Activated CD4-positive, alpha-beta memory T cell treated with anti-CD3 and anti-CD28 coated beads for 36 hours (primary cell): ENCODE measurements at regions of chr1 and their contacts with region 1.

Region 1: DNA sequence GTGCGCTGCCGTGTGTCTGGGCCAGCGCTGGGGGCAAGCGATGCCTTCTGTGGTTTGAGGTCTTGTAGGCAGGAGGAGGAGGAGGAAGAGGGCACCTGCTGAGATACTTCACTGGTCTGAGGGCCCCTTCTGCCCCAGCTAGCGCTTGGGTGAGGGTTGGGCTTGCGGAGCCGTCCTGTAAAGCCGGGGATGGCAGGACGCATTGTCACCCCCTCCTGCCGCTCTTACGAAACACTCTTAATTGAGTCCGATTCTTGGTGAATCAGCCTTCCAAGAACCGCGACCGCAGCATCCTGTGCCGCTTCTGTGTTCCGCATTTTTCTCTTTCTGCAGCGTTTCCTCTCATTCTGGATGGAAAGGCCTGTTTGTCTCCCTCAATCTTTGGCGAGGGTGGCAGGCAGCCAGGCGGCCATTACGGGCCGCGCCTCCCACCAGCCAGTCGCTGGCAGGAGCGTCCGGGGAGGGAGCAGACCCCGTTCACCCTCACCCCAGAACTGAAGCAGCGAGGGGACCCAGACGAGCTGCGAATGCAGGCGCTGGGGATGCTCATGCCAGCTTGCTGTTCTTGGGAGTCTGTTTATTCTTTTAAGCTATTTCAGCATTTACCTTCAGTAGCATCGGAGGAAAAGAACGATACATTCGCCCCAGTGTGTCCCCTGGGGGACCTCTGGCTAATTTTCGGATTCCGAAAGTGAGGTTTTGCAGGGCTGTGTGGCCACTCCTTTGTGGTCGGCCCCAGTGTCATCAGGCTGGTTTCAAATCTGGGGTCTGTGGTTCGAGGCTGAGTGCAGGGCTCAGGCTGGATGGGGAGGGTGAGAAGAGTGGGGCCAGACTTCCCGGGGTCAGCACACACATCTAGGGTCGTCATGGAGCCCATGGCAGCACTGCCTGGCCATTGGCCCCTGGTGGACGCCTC is 62.7 kb downstream of the SKI start:
- DNase-seq: peak; percentile 94
- H3K4me3 Mint-ChIP-seq: peak overlapping the region; percentile 70
- H3K27ac Mint-ChIP-seq: peak overlapping the region; percentile 96
- H3K4me1 Mint-ChIP-seq: peaks cover 81% of the 10 kb centered on the region
- H3K27me3 Mint-ChIP-seq: no peaks in the 10 kb centered on the region

Region 2: GRCh38 chr1:1890506-1891348 is 400.1 kb before region 1 on chr1 and contains the start of gene GNB1:
- CTCF ChIA-PET with region 1: no interaction called
- POLR2A ChIA-PET with region 1: no interaction called
- intact Hi-C with region 1: no loop called
- DNase-seq: peak; percentile 90
- H3K4me3 Mint-ChIP-seq: peak within 1 kb of the TSS; percentile 81
- H3K27ac Mint-ChIP-seq: peak within 1 kb of the TSS; percentile 88
- H3K4me1 Mint-ChIP-seq: peaks cover 49% of the 10 kb centered on the region
- H3K27me3 Mint-ChIP-seq: no peaks in the 10 kb centered on the region
- total RNA-seq, gene GNB1: 396 to 403 TPM

Region 3: DNA sequence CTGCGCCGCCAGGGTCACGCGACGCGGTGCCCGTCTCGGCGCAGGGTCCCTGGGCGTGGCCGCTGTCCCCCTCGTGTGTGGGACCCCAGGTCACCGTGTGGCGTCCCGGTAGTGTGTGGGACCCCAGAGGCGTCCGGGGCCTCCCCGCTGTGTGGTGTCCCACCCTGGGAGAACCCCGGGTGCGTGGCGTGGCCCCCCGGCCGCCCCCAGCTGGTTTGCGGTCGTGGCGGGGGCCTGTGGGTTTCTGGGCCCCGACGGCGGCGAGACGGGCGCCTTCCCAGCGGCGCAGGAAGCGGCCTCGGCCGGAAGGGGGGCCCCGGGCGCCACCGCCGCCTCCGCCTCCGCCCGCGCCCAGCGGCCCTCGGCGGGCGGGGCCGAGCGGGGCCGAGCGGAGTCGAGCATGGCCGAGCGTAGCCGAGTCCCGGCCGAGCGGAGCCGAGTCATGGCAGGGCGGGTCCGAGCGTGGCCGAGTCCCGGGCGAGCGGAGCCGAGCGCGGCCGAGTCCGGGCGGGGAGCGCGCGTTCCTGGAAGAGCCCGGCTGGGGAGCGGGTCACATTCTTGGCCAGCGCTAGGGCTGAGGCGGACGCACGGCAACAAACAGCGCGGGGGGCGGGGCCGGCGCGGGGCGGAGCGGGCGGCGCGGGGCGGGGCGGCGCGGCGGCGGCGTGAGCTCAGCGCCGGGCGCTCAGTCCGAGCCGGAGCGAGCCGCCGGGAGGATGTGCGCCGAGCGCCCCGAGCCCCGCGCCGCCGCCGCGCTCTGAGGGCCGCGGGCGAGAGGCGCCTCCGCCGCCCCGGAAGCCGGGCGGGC is 63.3 kb before region 1 on chr1:
- CTCF ChIA-PET with region 1: no interaction called
- POLR2A ChIA-PET with region 1: interaction called, 15 read pairs
- intact Hi-C with region 1: no loop called
- DNase-seq: peak; percentile 97
- H3K4me3 Mint-ChIP-seq: peak overlapping the region; percentile 55
- H3K27ac Mint-ChIP-seq: no peak overlapping the region
- H3K4me1 Mint-ChIP-seq: peaks cover 9% of the 10 kb centered on the region
- H3K27me3 Mint-ChIP-seq: peaks cover 1% of the 10 kb centered on the region

Region 4: GRCh38 chr1:2255420-2256369 is 35.2 kb before region 1 on chr1:
- CTCF ChIA-PET with region 1: no interaction called
- POLR2A ChIA-PET with region 1: interaction called, 9 read pairs
- intact Hi-C with region 1: loop called (anchors 1 kb)
- DNase-seq: peak; percentile 89
- H3K4me3 Mint-ChIP-seq: no peak overlapping the region
- H3K27ac Mint-ChIP-seq: no peak overlapping the region
- H3K4me1 Mint-ChIP-seq: peaks cover 51% of the 10 kb centered on the region
- H3K27me3 Mint-ChIP-seq: no peaks in the 10 kb centered on the region

Region 5: DNA sequence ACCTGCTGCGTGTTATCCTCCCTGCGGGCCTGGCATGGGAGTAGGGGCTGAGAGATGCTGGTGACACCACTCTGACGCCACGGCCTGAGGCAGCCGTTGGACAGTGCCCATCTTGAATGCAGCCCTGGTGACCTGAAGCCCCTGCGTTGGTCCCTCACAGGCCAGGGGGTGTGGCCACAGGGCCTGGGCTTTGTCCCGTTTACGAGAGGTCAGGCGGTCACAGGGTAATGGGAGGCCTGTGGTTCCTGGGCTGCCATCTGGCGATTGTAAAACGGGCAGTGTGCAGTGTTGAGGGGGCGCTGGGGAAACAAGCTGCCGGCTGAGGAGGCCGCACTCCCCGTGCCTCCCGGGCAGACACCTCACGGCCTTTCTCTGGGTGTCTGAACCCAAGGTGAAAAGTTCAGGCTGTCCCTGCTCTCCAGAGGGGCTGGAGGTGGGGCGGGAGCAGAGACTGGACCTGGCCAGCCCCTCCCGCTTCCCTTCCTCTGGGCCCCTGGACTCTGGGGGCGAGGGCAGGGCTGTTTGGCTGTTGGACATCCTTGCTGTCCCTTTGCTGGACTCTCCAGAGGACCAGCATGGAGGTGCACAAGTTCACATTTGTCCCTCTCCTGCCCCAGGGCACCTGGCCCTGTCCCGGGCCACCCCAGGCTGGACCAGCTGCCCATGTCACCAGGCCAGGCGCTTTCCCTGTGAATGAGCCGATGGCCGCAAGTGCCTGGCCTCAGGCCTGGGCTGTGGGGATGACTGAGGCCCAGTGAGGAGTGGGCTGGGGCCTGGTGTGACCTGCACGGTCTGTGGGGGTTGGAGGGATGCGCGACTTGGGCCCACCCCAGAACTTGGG is 20.4 kb before region 1 on chr1:
- CTCF ChIA-PET with region 1: no interaction called
- POLR2A ChIA-PET with region 1: no interaction called
- intact Hi-C with region 1: no loop called
- DNase-seq: no peak
- H3K4me3 Mint-ChIP-seq: no peak overlapping the region
- H3K27ac Mint-ChIP-seq: no peak overlapping the region
- H3K4me1 Mint-ChIP-seq: peaks cover 52% of the 10 kb centered on the region
- H3K27me3 Mint-ChIP-seq: no peaks in the 10 kb centered on the region

Region 6: GRCh38 chr1:2391041-2391930 is 100.4 kb after region 1 on chr1 and contains the starts of genes MORN1 and RER1:
- CTCF ChIA-PET with region 1: no interaction called
- POLR2A ChIA-PET with region 1: no interaction called
- intact Hi-C with region 1: loop called (anchors 5 kb)
- DNase-seq: peak; percentile 99
- H3K4me3 Mint-ChIP-seq: peak within 1 kb of the TSS; percentile 93
- H3K27ac Mint-ChIP-seq: peak within 1 kb of the TSS; percentile 84
- H3K4me1 Mint-ChIP-seq: peaks cover 39% of the 10 kb centered on the region
- H3K27me3 Mint-ChIP-seq: no peaks in the 10 kb centered on the region
- total RNA-seq, gene MORN1: 5.4 to 6.3 TPM
- total RNA-seq, gene RER1: 148 to 154 TPM